CD8-positive, alpha-beta T cell (primary cell): ENCODE measurements at regions of chr3 and their contacts with region 1.

Region 1: GRCh38 chr3:197029511-197030167 is at the start of gene MELTF:
- DNase-seq: peak; percentile 44 to 82 (median 64)
- ATAC-seq: peak; percentile 95
- H3K4me3 ChIP-seq: peak within 1 kb of the TSS; percentile 51 to 54
- H3K4me3 Mint-ChIP-seq: peak within 1 kb of the TSS; percentile 77
- H3K27ac ChIP-seq: no peak within 1 kb of the TSS
- H3K27ac Mint-ChIP-seq: no peak within 1 kb of the TSS
- H3K4me1 ChIP-seq: peaks cover 16% of the 10 kb centered on the region
- H3K4me1 Mint-ChIP-seq: peaks cover 6% of the 10 kb centered on the region
- H3K27me3 ChIP-seq: no peaks in the 10 kb centered on the region
- H3K27me3 Mint-ChIP-seq: peaks cover 9% of the 10 kb centered on the region
- CTCF ChIP-seq: peak; percentile 72
- total RNA-seq, gene MELTF: 0.69 to 0.87 TPM

Region 2: DNA sequence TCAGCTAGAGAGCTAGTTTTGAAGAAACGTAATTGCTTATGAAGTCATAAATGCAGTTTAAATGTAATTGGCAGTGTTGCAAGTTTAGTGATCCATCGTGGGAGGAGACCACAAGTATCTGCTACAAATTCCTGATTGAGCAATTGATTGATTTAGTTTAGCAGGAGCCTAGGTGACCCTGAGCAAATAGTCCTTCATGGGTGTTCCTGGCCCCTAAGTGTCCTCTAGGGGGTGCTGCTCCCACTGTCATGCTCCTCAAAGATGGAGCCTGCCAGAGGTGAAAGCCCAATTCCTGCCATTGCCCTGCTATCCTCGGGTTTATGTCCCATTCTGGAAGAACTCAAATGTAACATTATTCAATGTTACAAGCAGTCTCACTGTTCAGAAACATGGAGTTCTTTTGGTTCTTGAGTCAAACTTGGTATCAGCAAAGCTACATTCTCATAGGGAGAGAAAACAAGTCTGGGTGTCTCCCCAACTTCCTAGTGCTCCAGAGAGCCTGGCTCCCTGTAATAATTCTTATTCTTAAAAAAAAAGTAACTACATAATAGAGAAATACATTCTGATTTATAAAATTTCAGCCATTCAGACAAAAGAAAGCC is 191.7 kb before region 1 on chr3:
- CTCF ChIA-PET with region 1: no interaction called
- POLR2A ChIA-PET with region 1: no interaction called
- intact Hi-C with region 1: loop called in 1 of 2 experiments (anchors 1 kb)
- DNase-seq: peak; percentile 39 to 85 (median 75)
- ATAC-seq: peak; percentile 96
- H3K4me3 ChIP-seq: no peak overlapping the region
- H3K4me3 Mint-ChIP-seq: no peak overlapping the region
- H3K27ac ChIP-seq: no peak overlapping the region
- H3K27ac Mint-ChIP-seq: no peak overlapping the region
- H3K4me1 ChIP-seq: no peaks in the 10 kb centered on the region
- H3K4me1 Mint-ChIP-seq: peaks cover 2% of the 10 kb centered on the region
- H3K27me3 ChIP-seq: no peaks in the 10 kb centered on the region
- H3K27me3 Mint-ChIP-seq: no peaks in the 10 kb centered on the region
- CTCF ChIP-seq: peak; percentile 83

Region 3: DNA sequence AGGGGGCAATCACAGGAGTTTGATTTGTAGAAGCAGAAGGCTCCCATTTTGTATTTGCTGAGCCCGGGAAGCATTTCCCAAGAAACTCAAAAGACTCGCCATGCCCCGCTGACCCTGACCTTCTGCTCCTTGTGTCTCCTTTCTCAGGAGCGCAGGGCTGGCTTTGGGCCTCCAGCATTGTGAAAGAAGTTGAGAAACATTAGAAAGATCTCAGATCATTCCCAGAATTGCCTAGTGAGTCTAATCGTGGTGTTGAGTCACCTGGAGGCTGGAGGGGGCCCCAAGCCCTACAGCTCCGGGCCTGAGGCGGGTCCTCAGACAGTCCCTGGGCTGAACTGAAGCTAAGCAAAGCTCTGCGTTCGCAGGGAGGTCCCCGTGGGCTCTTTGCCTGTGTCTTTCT is 50.1 kb before region 1 on chr3:
- CTCF ChIA-PET with region 1: interaction called, 5 read pairs
- POLR2A ChIA-PET with region 1: no interaction called
- intact Hi-C with region 1: loop called in 1 of 2 experiments (anchors 1 kb)
- DNase-seq: no peak
- ATAC-seq: no peak
- H3K4me3 ChIP-seq: no peak overlapping the region
- H3K4me3 Mint-ChIP-seq: no peak overlapping the region
- H3K27ac ChIP-seq: no peak overlapping the region
- H3K27ac Mint-ChIP-seq: no peak overlapping the region
- H3K4me1 ChIP-seq: no peaks in the 10 kb centered on the region
- H3K4me1 Mint-ChIP-seq: peaks cover 2% of the 10 kb centered on the region
- H3K27me3 ChIP-seq: peaks cover 2 to 4% of the 10 kb centered on the region in 2 experiments
- H3K27me3 Mint-ChIP-seq: peaks cover 6% of the 10 kb centered on the region
- CTCF ChIP-seq: no peak

Region 4: GRCh38 chr3:197002701-197003454 is 26.8 kb before region 1 on chr3:
- CTCF ChIA-PET with region 1: interaction called, 16 read pairs
- POLR2A ChIA-PET with region 1: no interaction called
- intact Hi-C with region 1: loop called (anchors 1 kb)
- DNase-seq: peak; percentile 49 to 92 (median 77)
- ATAC-seq: peak; percentile 82
- H3K4me3 ChIP-seq: peak overlapping the region; percentile 41 to 58
- H3K4me3 Mint-ChIP-seq: no peak overlapping the region
- H3K27ac ChIP-seq: no peak overlapping the region
- H3K27ac Mint-ChIP-seq: no peak overlapping the region
- H3K4me1 ChIP-seq: peaks cover 8% of the 10 kb centered on the region
- H3K4me1 Mint-ChIP-seq: peaks cover 12% of the 10 kb centered on the region
- H3K27me3 ChIP-seq: no peaks in the 10 kb centered on the region
- H3K27me3 Mint-ChIP-seq: no peaks in the 10 kb centered on the region
- CTCF ChIP-seq: peak; percentile 47

Region 5: GRCh38 chr3:197019021-197019420 is 10.6 kb before region 1 on chr3:
- CTCF ChIA-PET with region 1: interaction called, 21 read pairs
- POLR2A ChIA-PET with region 1: no interaction called
- intact Hi-C with region 1: no loop called
- DNase-seq: no peak
- ATAC-seq: no peak
- H3K4me3 ChIP-seq: no peak overlapping the region
- H3K4me3 Mint-ChIP-seq: no peak overlapping the region
- H3K27ac ChIP-seq: no peak overlapping the region
- H3K27ac Mint-ChIP-seq: no peak overlapping the region
- H3K4me1 ChIP-seq: peaks cover 13% of the 10 kb centered on the region
- H3K4me1 Mint-ChIP-seq: peaks cover 15% of the 10 kb centered on the region
- H3K27me3 ChIP-seq: peaks cover 0 to 2% of the 10 kb centered on the region in 2 experiments
- H3K27me3 Mint-ChIP-seq: peaks cover 5% of the 10 kb centered on the region
- CTCF ChIP-seq: no peak

Region 6: DNA sequence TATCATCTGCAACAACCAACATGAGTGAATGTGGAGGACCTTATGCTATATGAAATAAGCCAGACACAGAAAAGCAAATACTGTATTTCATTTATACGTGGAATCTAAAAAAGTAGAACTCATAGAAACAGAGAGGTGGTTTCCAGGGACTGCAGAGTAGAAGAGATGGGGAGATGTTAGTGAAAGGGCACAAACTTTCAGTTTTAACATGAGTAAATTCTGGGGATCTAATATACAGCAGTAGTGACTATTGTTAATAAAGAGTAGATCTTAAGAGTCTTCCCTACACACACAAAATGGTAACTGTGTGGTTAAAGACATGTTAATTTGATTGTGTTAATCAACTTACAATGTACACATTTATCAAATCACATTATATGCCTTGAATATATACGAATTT is 20.9 kb after region 1 on chr3:
- CTCF ChIA-PET with region 1: interaction called, 13 read pairs
- POLR2A ChIA-PET with region 1: no interaction called
- intact Hi-C with region 1: no loop called
- DNase-seq: no peak
- ATAC-seq: no peak
- H3K4me3 ChIP-seq: no peak overlapping the region
- H3K4me3 Mint-ChIP-seq: no peak overlapping the region
- H3K27ac ChIP-seq: no peak overlapping the region
- H3K27ac Mint-ChIP-seq: peak overlapping the region; percentile 29
- H3K4me1 ChIP-seq: no peaks in the 10 kb centered on the region
- H3K4me1 Mint-ChIP-seq: no peaks in the 10 kb centered on the region
- H3K27me3 ChIP-seq: no peaks in the 10 kb centered on the region
- H3K27me3 Mint-ChIP-seq: no peaks in the 10 kb centered on the region
- CTCF ChIP-seq: no peak